ENCODE measurements at regions of chr1 and their contacts with region 1.

Region 1: GRCh38 chr1:96945509-96946084 is 224.0 kb downstream of the PTBP2 start:
- DNase-seq: no peak
- H3K4me3 ChIP-seq: no peak overlapping the region
- H3K27ac ChIP-seq: no peak overlapping the region
- H3K4me1 ChIP-seq: no peaks in the 10 kb centered on the region
- H3K27me3 ChIP-seq: no peaks in the 10 kb centered on the region
- CTCF ChIP-seq: no peak
- EP300 ChIP-seq: no peak
- POLR2A ChIP-seq: no peak

Region 2: DNA sequence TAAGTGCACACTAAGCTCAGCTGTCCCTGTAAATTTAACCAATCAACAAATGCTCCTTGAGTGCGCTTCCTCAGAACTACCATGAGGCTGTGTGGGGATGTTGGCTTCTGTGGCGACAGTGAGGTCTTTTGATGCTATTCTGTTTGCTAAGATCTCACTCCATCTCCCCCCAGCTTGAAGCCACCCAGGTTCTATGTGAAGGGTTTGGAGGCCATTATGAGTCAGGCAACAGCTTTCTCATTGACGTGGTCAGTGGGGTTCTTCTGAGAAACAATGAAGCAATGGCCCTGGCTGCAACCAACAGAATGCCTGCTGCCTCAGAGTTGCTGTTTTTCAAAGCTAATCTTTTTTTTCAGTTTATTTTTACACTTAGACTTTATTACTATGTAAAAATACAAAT is 18.5 kb before region 1 on chr1:
- intact Hi-C with region 1: loop called in 1 of 4 experiments (anchors 1 kb)
- DNase-seq: no peak
- H3K4me3 ChIP-seq: no peak overlapping the region
- H3K27ac ChIP-seq: no peak overlapping the region
- H3K4me1 ChIP-seq: no peaks in the 10 kb centered on the region
- H3K27me3 ChIP-seq: no peaks in the 10 kb centered on the region
- CTCF ChIP-seq: no peak
- EP300 ChIP-seq: no peak
- POLR2A ChIP-seq: no peak

Region 3: GRCh38 chr1:96995351-96995750 is 49.8 kb after region 1 on chr1:
- intact Hi-C with region 1: no loop called
- DNase-seq: no peak
- H3K4me3 ChIP-seq: no peak overlapping the region
- H3K27ac ChIP-seq: no peak overlapping the region
- H3K4me1 ChIP-seq: no peaks in the 10 kb centered on the region
- H3K27me3 ChIP-seq: no peaks in the 10 kb centered on the region
- CTCF ChIP-seq: no peak
- EP300 ChIP-seq: no peak
- POLR2A ChIP-seq: no peak

Region 4: GRCh38 chr1:97893844-97894243 is 948.2 kb after region 1 on chr1:
- intact Hi-C with region 1: no loop called
- DNase-seq: no peak
- H3K4me3 ChIP-seq: no peak overlapping the region
- H3K27ac ChIP-seq: no peak overlapping the region
- H3K4me1 ChIP-seq: no peaks in the 10 kb centered on the region
- H3K27me3 ChIP-seq: no peaks in the 10 kb centered on the region
- CTCF ChIP-seq: no peak
- EP300 ChIP-seq: no peak
- POLR2A ChIP-seq: no peak

Measured in ovary (tissue), 10 donors.